ENCODE measurements at regions of chr1 and their contacts with region 1.

Region 1: GRCh38 chr1:18820791-18821641 is 38.4 kb downstream of the TAS1R2 start:
- DNase-seq: peak; percentile 91
- ATAC-seq: peak; percentile 94
- H3K4me3 Mint-ChIP-seq: no peak overlapping the region
- H3K27ac Mint-ChIP-seq: no peak overlapping the region
- H3K4me1 Mint-ChIP-seq: peaks cover 16% of the 10 kb centered on the region
- H3K27me3 Mint-ChIP-seq: peaks cover 14% of the 10 kb centered on the region
- CTCF ChIP-seq: peak; percentile 89

Region 2: GRCh38 chr1:18681423-18681835 is 139.6 kb before region 1 on chr1:
- CTCF ChIA-PET with region 1: interaction called, 16 read pairs
- POLR2A ChIA-PET with region 1: no interaction called
- DNase-seq: no peak
- ATAC-seq: peak; percentile 68
- H3K4me3 Mint-ChIP-seq: no peak overlapping the region
- H3K27ac Mint-ChIP-seq: no peak overlapping the region
- H3K4me1 Mint-ChIP-seq: peaks cover 21% of the 10 kb centered on the region
- H3K27me3 Mint-ChIP-seq: peaks cover 59% of the 10 kb centered on the region
- CTCF ChIP-seq: peak; percentile 64; the same call in 1 of the 2 replicates

Region 3: DNA sequence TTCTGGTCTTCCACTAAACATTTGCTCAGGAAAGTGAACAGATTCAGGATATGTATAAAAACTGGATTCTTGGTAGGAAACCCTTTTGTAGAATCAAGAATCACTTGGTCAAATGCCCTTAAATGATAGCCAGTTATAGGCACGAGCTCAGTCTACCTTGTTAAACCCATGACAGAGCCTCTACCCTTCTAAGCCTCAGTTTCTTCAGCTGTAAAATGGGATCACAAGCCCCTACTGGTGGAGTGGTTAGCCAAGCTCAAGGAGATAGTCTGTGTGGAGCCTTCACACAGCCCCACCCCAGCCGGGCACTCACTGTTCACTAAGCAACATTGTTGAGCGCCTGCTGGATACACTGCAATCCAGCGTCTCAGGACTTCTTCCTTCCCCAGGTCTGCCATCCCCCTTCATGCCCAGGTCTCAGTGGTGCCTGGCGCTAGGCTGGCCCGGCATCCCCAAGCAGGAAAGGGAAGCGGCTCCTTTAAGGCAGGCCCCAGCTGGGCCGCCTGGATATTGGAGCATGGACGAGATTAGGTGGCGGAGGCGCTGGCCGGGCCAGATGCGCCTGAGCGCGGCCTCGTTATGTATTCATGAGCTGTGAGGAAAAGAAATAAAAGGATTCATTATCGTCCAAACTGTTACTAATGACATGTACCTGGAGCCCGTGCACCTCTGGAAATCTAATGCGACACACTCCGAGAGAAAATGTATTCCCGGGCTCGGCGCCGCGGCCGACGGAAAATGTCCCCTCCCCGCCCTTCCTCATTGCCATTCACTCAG is 37.1 kb before region 1 on chr1:
- CTCF ChIA-PET with region 1: interaction called, 16 read pairs
- POLR2A ChIA-PET with region 1: no interaction called
- DNase-seq: no peak
- ATAC-seq: peak; percentile 69
- H3K4me3 Mint-ChIP-seq: peak overlapping the region; percentile 76
- H3K27ac Mint-ChIP-seq: no peak overlapping the region
- H3K4me1 Mint-ChIP-seq: peaks cover 35% of the 10 kb centered on the region
- H3K27me3 Mint-ChIP-seq: peaks cover 15% of the 10 kb centered on the region
- CTCF ChIP-seq: no peak

Region 4: GRCh38 chr1:18805925-18806849 is 14.8 kb before region 1 on chr1:
- CTCF ChIA-PET with region 1: interaction called, 11 read pairs
- POLR2A ChIA-PET with region 1: no interaction called
- DNase-seq: no peak
- ATAC-seq: no peak
- H3K4me3 Mint-ChIP-seq: no peak overlapping the region
- H3K27ac Mint-ChIP-seq: no peak overlapping the region
- H3K4me1 Mint-ChIP-seq: peaks cover 4% of the 10 kb centered on the region; the same call in 1 of the 2 replicates
- H3K27me3 Mint-ChIP-seq: no peaks in the 10 kb centered on the region; the same call in 1 of the 2 replicates
- CTCF ChIP-seq: no peak

Region 5: DNA sequence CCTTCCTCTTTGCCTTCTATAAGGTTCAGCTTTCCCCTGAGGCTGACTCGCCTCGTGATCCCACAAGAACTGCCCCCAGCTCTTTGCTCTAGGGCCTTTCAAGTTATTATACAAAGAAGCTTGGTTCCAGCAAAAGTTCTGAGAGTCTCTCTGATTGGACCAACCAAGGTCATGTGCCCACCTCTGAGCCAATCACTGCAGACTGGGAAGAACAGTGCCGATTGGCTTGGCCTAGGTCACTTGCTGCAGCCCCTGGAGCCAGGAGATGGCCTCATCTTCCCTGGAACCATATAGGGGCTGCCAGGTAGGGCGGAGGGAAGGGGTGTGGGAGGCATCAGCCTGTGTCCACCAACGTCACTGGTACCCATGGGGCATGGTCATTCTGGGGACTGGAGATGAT is 15.6 kb after region 1 on chr1:
- CTCF ChIA-PET with region 1: interaction called, 10 read pairs
- POLR2A ChIA-PET with region 1: no interaction called
- DNase-seq: no peak
- ATAC-seq: peak; percentile 66
- H3K4me3 Mint-ChIP-seq: no peak overlapping the region
- H3K27ac Mint-ChIP-seq: no peak overlapping the region
- H3K4me1 Mint-ChIP-seq: no peaks in the 10 kb centered on the region
- H3K27me3 Mint-ChIP-seq: peaks cover 21% of the 10 kb centered on the region
- CTCF ChIP-seq: no peak

Region 6: GRCh38 chr1:18875107-18875795 is 54.2 kb after region 1 on chr1:
- CTCF ChIA-PET with region 1: interaction called, 13 read pairs
- POLR2A ChIA-PET with region 1: no interaction called
- DNase-seq: peak; percentile 95
- ATAC-seq: peak; percentile 89
- H3K4me3 Mint-ChIP-seq: no peak overlapping the region
- H3K27ac Mint-ChIP-seq: no peak overlapping the region
- H3K4me1 Mint-ChIP-seq: no peaks in the 10 kb centered on the region; the same call in 1 of the 2 replicates
- H3K27me3 Mint-ChIP-seq: no peaks in the 10 kb centered on the region
- CTCF ChIP-seq: peak; percentile 93

Measured in WTC11 (cell line).